ENCODE measurements at regions of chr18 and their contacts with region 1.

Region 1: DNA sequence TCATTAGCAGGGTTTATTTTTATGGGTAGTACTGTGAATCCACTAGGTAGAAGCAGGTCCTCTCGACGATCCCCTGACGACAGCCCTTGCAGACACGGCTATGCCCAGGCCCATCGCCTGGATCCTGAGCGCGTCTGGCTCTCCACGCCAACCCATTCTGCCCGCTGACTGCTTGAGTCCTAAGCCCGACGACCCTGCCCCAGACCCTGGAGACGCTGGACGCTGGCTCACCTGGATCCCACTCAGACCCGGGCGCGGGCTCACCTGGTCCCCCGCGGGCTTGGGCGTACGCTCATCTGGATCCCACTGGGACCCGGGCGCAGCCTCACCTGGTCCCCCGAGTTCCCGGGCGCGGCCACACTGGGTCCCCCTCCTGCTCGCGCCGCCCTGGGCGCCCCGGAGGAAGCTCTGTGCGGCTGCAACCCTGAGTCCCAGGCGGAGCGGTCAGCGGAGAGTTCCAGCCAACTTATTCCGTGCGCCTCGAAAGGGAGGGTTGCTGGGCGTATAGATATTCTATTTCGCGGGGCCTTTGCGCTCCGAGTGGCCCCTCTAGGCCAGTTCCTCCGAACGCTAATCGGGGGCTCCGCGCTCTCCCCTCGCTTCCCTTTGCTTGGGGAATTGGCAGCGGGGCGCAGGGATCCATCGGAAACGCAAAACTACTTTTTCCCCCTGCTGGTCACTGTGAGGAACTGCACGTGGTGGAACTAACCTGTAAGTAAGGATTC is 22.4 kb upstream of the RMP24 start:
- DNase-seq: peak in 1 of 2 donors; percentile 23
- ATAC-seq: peak; percentile 70 to 83
- H3K4me3 ChIP-seq: peak overlapping the region; percentile 57 to 73 (median 68)
- H3K27ac ChIP-seq: no peak overlapping the region
- H3K4me1 ChIP-seq: peaks cover 5% of the 10 kb centered on the region in 2 donors
- H3K27me3 ChIP-seq: peaks cover 0 to 8% (median 0%) of the 10 kb centered on the region in 3 donors
- CTCF ChIP-seq: peak; percentile 82 to 94 (median 85)
- POLR2A ChIP-seq: no peak

Region 2: GRCh38 chr18:35407871-35408481 is 542.1 kb before region 1 on chr18:
- in situ Hi-C with region 1: loop called in 3 of 4 experiments (anchors 25 kb)
- intact Hi-C with region 1: loop called (anchors 1 kb)
- DNase-seq: peak; percentile 12 to 17
- ATAC-seq: peak; percentile 85 to 96
- H3K4me3 ChIP-seq: no peak overlapping the region
- H3K27ac ChIP-seq: no peak overlapping the region
- H3K4me1 ChIP-seq: peaks cover 3% of the 10 kb centered on the region in 2 donors
- H3K27me3 ChIP-seq: no peaks in the 10 kb centered on the region
- CTCF ChIP-seq: peak; percentile 57 to 76 (median 65)
- POLR2A ChIP-seq: no peak

Region 3: GRCh38 chr18:35756506-35757117 is 193.5 kb before region 1 on chr18:
- in situ Hi-C with region 1: loop called in 3 of 4 experiments (anchors 5 to 25 kb)
- intact Hi-C with region 1: loop called (anchors 2 kb)
- DNase-seq: peak in 1 of 2 donors; percentile 22
- ATAC-seq: peak; percentile 54 to 66
- H3K4me3 ChIP-seq: no peak overlapping the region
- H3K27ac ChIP-seq: no peak overlapping the region
- H3K4me1 ChIP-seq: no peaks in the 10 kb centered on the region
- H3K27me3 ChIP-seq: no peaks in the 10 kb centered on the region
- CTCF ChIP-seq: peak; percentile 46 to 73 (median 60)
- POLR2A ChIP-seq: no peak

Measured in gastrocnemius medialis (tissue), 4 donors.